CD4-positive, alpha-beta memory T cell (primary cell): ENCODE measurements at regions of chr3 and their contacts with region 1.

Region 1: GRCh38 chr3:196979545-196979944 is 10.9 kb upstream of the PIGZ start:
- DNase-seq: no peak
- H3K4me3 ChIP-seq: no peak overlapping the region
- H3K4me3 Mint-ChIP-seq: no peak overlapping the region
- H3K27ac ChIP-seq: no peak overlapping the region
- H3K27ac Mint-ChIP-seq: no peak overlapping the region
- H3K4me1 ChIP-seq: no peaks in the 10 kb centered on the region
- H3K4me1 Mint-ChIP-seq: peaks cover 3 to 8% (median 4%) of the 10 kb centered on the region in 4 donors
- H3K27me3 ChIP-seq: no peaks in the 10 kb centered on the region
- H3K27me3 Mint-ChIP-seq: peaks cover 6 to 12% of the 10 kb centered on the region in 2 donors

Region 2: DNA sequence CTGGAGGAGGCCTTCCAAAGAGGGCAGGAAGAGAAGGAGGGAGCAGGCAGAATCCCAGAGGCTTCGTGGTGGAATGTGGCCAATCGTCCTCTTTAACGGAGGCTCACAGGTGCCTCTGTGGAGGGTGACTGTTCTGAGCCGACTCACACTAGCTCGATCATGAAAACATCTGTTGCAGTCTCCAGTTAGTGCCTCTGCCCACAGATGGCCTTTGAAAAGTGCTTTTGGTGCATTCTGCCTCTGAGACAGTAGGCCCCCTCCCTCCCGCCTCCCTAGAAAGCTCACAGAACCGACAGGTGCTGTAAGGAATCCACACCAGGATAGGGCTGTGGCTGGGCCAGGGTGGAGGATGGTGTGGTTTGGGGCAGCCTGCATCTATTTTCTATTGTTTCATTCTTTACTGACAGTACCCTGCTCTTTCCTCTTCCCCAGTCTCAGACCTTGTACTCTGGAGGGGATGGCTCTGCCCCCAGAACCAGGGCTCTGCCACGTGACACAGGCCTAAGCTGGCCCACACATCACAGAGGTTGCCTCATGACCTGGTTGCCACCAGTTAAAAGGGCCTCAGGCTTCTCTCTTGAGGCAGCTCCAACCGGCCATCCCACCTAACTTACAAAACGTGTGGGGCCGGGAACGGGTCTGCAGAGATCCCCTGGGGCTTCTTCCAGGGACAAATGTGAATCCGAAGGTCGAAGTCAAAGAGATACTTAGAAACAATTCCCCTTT is 16.3 kb after region 1 on chr3:
- CTCF ChIA-PET with region 1: no interaction called
- POLR2A ChIA-PET with region 1: no interaction called
- intact Hi-C with region 1: no loop called
- DNase-seq: no peak
- H3K4me3 ChIP-seq: no peak overlapping the region
- H3K4me3 Mint-ChIP-seq: no peak overlapping the region
- H3K27ac ChIP-seq: no peak overlapping the region
- H3K27ac Mint-ChIP-seq: no peak overlapping the region
- H3K4me1 ChIP-seq: no peaks in the 10 kb centered on the region
- H3K4me1 Mint-ChIP-seq: no peaks in the 10 kb centered on the region
- H3K27me3 ChIP-seq: no peaks in the 10 kb centered on the region
- H3K27me3 Mint-ChIP-seq: no peaks in the 10 kb centered on the region

Region 3: GRCh38 chr3:197186887-197187588 is 207.5 kb after region 1 on chr3:
- CTCF ChIA-PET with region 1: no interaction called
- POLR2A ChIA-PET with region 1: no interaction called
- intact Hi-C with region 1: loop called (anchors 1 kb)
- DNase-seq: peak; percentile 40 to 54 (median 48)
- H3K4me3 ChIP-seq: no peak overlapping the region
- H3K4me3 Mint-ChIP-seq: no peak overlapping the region
- H3K27ac ChIP-seq: no peak overlapping the region
- H3K27ac Mint-ChIP-seq: no peak overlapping the region
- H3K4me1 ChIP-seq: no peaks in the 10 kb centered on the region
- H3K4me1 Mint-ChIP-seq: peaks cover 6 to 23% (median 14%) of the 10 kb centered on the region in 4 donors
- H3K27me3 ChIP-seq: no peaks in the 10 kb centered on the region
- H3K27me3 Mint-ChIP-seq: no peaks in the 10 kb centered on the region